ENCODE measurements at regions of chr1 and their contacts with region 1.

Region 1: DNA sequence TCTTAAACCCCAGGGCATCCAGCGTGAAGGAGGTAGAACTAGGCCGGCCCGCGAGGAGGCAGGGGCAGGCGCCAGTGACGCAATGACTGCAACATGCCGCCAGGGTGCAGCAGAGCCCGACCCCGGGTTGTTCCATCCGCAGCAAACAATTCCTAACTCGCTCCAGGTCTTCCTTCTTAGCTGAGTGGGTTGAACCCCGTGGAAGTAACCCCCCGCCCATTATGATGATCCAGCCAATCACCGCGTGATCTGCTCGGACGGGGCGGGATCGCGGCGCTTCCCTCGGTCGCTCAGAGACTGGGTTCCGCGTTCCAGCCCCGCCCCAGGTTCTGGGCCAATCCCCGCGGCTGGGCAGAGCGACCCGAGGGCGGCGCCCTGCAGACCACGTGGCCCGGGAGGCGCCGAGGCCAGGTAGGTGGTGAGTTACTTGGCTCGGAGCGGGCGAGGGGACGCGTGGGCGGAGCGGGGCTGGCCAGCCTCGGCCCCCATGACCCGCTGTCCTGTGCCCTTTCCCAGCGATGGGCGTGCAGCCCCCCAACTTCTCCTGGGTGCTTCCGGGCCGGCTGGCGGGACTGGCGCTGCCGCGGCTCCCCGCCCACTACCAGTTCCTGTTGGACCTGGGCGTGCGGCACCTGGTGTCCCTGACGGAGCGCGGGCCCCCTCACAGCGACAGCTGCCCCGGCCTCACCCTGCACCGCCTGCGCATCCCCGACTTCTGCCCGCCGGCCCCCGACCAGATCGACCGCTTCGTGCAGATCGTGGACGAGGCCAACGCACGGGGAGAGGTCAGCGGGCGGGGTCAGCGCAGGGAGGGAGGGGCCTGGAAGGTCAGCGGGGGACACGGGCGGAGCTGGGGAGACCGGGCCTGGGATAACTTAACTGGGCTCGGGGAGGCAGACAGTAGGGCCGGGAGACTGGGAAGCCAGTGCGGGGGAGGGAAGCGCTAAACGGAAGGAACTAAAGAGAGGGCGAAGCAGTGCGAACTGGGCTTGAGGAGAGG is at the start of gene DUSP23:
- DNase-seq: peak; percentile 99
- H3K4me3 ChIP-seq: peak within 1 kb of the TSS; percentile 65 to 91 (median 77)
- H3K27ac ChIP-seq: no peak within 1 kb of the TSS
- H3K4me1 ChIP-seq: peaks cover 25% of the 10 kb centered on the region
- H3K27me3 ChIP-seq: no peaks in the 10 kb centered on the region
- CTCF ChIP-seq: peak; percentile 82 to 96
- total RNA-seq, gene DUSP23: 32.1 to 39.5 TPM

Region 2: DNA sequence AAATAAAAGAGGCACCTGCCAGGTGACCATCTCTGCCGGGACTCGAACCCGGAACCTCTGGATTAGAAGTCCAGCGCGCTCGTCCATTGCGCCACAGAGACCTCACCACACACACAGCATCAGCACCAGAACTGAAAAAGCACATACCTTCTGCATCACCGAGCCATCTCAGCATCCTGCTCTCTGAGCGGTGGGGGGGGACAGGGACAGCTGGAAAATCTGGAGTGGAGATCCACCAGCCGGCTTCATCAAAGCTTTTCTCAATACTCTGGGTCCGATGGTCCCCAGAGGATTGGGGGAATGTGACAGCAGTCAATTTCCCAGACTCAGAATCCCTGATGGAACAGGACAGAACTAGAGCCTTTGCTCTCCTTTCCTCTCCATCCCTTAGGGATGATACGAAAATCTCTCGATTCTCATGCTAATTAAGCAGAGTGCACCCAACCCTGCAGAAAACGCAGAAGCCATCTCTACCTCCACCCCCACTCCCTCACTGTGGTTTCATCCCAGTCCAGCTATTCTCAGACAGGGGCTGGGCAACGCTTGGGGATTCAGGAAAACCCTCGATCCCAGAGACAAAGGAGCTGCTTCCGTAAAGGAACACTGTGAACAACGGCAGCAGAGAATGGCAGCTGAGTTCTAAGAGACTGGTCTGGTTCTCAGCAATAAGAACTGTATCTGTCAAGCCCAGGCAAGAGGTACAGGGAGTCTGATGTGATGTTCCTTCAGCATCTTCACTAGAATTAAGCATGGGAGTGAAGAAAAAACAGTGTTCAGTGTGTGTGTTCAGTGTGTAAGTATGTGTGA is 639.1 kb before region 1 on chr1:
- CTCF ChIA-PET with region 1: no interaction called
- dilution Hi-C with region 1: no loop called
- in situ Hi-C with region 1: no loop called
- intact Hi-C with region 1: loop called (anchors 5 kb)
- DNase-seq: peak; percentile 85
- H3K4me3 ChIP-seq: peak overlapping the region; percentile 23 to 47 (median 38)
- H3K27ac ChIP-seq: no peak overlapping the region
- H3K4me1 ChIP-seq: peaks cover 6% of the 10 kb centered on the region
- H3K27me3 ChIP-seq: peaks cover 3% of the 10 kb centered on the region
- CTCF ChIP-seq: no peak

Region 3: DNA sequence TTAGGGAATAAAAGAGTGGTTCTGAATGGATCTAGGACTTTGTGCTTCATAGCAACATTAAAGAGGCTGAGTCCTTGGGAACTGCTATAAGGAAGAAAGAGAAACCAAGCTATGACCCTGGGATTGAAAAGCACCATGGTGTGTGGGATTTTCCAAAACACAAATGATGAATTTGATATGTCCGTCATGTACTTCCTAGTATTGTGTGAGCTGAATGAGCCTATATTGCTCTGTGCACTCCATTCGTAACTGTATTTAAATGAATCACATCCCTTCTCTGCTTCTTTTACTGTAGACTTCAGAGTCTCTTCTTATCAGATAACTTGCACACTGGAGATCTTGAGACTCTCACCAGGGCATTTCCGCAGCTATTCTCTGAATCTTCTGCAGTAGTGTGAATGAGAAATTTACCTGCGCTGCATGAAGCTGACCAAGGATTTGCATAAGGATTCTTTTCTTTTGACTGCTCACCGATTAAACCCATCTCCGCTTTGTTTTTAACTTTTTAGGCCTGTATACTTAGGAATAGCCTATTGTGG is 372.0 kb before region 1 on chr1:
- CTCF ChIA-PET with region 1: no interaction called
- dilution Hi-C with region 1: no loop called
- in situ Hi-C with region 1: no loop called
- intact Hi-C with region 1: no loop called
- DNase-seq: no peak
- H3K4me3 ChIP-seq: no peak overlapping the region
- H3K27ac ChIP-seq: no peak overlapping the region
- H3K4me1 ChIP-seq: no peaks in the 10 kb centered on the region
- H3K27me3 ChIP-seq: no peaks in the 10 kb centered on the region
- CTCF ChIP-seq: no peak

Region 4: GRCh38 chr1:159598196-159598595 is 182.7 kb before region 1 on chr1:
- CTCF ChIA-PET with region 1: no interaction called
- dilution Hi-C with region 1: no loop called
- in situ Hi-C with region 1: no loop called
- intact Hi-C with region 1: loop called (anchors 5 kb)
- DNase-seq: peak; percentile 93
- H3K4me3 ChIP-seq: no peak overlapping the region
- H3K27ac ChIP-seq: peak overlapping the region; percentile 67
- H3K4me1 ChIP-seq: peaks cover 23% of the 10 kb centered on the region
- H3K27me3 ChIP-seq: no peaks in the 10 kb centered on the region
- CTCF ChIP-seq: no peak

Region 5: DNA sequence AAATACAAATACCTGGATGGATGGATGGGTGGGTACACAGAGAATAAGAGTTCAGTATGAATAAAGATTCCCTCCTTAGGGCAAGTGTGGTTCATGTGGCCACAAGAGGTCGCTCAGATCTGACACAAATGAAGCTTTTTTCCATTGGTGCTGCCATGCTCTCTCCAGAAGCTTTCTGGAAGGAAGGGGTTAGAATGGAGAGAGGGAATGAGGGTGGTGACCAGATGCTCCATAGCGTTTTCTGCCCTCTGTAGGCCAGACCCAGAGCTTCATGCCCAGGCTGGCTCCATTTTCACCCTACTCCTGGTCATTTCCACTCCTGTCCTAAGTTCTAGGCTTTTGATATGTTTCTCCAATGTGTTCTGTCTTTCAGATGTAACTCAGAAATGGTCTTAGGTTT is 18.0 kb after region 1 on chr1:
- CTCF ChIA-PET with region 1: no interaction called
- dilution Hi-C with region 1: no loop called
- in situ Hi-C with region 1: no loop called
- intact Hi-C with region 1: loop called (anchors 1 kb)
- DNase-seq: peak; percentile 76
- H3K4me3 ChIP-seq: no peak overlapping the region
- H3K27ac ChIP-seq: no peak overlapping the region
- H3K4me1 ChIP-seq: no peaks in the 10 kb centered on the region
- H3K27me3 ChIP-seq: peaks cover 2% of the 10 kb centered on the region
- CTCF ChIP-seq: peak; percentile 80 to 82

Region 6: GRCh38 chr1:159881930-159882839 is 101.3 kb after region 1 on chr1:
- CTCF ChIA-PET with region 1: no interaction called
- dilution Hi-C with region 1: no loop called
- in situ Hi-C with region 1: no loop called
- intact Hi-C with region 1: loop called (anchors 2 kb)
- DNase-seq: peak; percentile 100
- H3K4me3 ChIP-seq: no peak overlapping the region
- H3K27ac ChIP-seq: peak overlapping the region; percentile 75
- H3K4me1 ChIP-seq: peaks cover 44% of the 10 kb centered on the region
- H3K27me3 ChIP-seq: no peaks in the 10 kb centered on the region
- CTCF ChIP-seq: no peak

Region 7: GRCh38 chr1:160018900-160019299 is 238.0 kb after region 1 on chr1:
- CTCF ChIA-PET with region 1: no interaction called
- dilution Hi-C with region 1: no loop called
- in situ Hi-C with region 1: no loop called
- intact Hi-C with region 1: no loop called
- DNase-seq: peak; percentile 42
- H3K4me3 ChIP-seq: no peak overlapping the region
- H3K27ac ChIP-seq: no peak overlapping the region
- H3K4me1 ChIP-seq: peaks cover 20% of the 10 kb centered on the region
- H3K27me3 ChIP-seq: no peaks in the 10 kb centered on the region
- CTCF ChIP-seq: no peak